ENCODE measurements at regions of chr17 and their contacts with region 1.

Region 1: DNA sequence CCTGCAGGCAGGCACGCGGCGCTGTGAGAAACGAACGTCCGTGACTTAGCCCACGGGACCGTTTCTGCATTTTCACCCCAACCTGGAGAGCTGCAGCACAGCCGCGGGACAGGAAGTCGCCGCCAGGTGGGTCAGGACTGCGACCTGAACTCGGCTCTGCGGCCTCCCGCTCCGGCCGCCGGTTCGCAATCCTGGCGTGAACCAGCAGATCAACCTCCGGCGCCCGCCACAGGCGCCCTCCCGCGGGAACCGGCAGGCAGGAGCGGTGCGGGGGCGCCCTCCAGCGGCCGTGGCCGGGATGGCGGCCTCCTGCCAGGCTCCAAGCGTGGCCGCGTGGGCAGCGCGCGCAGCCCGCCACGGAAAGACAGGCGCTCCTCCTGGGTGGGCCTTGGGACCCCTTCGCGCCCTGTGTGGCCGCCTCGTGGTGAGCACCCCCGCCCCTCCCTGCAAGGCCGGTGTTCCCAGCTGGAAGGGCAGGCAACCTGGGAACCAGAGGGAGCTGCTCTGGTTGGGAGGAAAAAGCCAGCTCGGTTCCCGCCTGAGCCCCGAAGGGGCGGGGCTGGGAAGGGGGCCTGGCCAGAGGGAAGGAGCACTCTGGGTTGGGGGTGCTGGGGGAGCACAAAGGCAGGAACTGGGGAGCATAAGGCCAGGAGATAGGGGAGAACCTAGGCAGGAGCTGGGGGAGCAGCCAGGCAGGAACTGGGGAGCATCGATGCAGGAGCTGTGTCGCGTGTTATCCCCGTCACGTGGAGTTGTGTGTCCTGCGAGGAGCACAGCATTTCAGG is 28.2 kb downstream of the ACTG1 start:
- DNase-seq: peak; percentile 93
- ATAC-seq: peak; percentile 64
- H3K4me3 Mint-ChIP-seq: peak overlapping the region; percentile 52
- H3K27ac Mint-ChIP-seq: no peak overlapping the region
- H3K4me1 Mint-ChIP-seq: peaks cover 11% of the 10 kb centered on the region
- H3K27me3 Mint-ChIP-seq: peaks cover 64% of the 10 kb centered on the region
- CTCF ChIP-seq: peak; percentile 96

Region 2: DNA sequence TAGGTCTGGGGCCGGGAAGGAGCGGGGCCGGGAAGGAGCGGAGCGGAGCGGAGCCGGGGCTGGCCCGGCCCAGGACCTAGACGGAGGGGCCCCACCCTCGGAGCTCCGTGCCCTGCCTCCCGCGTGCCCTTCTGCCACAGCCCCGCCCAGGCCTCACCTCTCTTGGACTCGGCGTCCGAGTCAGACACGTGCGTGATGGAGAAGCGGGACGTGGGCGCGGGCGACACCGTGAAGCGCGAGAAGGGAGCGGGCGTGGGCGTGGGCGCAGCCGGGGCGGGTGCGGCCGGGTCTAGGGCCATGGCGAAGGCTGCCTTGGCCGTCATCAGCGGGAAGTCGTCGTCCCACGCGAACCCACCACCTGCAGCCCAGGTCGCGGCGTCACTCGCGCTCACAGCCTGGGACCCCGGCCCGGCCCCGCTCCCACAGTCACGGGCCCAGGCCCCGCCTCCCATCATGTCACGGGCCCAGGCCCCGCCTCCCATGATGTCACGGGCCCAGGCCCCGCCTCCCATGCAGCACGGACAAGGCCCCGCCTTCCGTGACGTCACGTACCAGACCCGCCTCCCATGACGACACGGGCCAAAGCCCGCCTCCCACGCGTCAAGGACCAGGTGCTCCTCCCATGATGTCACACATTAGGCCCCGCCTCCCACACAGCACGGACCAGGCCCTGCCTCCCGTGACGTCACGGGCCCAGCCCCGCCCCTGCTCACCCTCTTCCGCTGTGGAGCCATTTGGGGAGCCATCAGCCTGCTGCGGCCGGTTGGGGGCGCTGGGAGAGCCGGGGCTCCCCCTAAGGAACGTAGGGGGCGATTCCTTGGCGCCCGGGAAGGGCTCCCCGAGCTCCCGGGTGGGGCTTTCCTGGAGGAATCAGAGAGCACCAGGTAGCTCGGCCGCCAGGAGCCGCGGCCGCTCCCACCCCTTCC is 364.9 kb before region 1 on chr17:
- CTCF ChIA-PET with region 1: interaction called, 10 read pairs
- POLR2A ChIA-PET with region 1: no interaction called
- DNase-seq: peak; percentile 99
- ATAC-seq: peak; percentile 71
- H3K4me3 Mint-ChIP-seq: peak overlapping the region; percentile 62
- H3K27ac Mint-ChIP-seq: no peak overlapping the region
- H3K4me1 Mint-ChIP-seq: no peaks in the 10 kb centered on the region
- H3K27me3 Mint-ChIP-seq: peaks cover 4% of the 10 kb centered on the region
- CTCF ChIP-seq: no peak; the same call in 1 of the 2 replicates

Region 3: GRCh38 chr17:81309070-81309905 is 175.1 kb before region 1 on chr17:
- CTCF ChIA-PET with region 1: interaction called, 22 read pairs
- POLR2A ChIA-PET with region 1: no interaction called
- DNase-seq: peak; percentile 64
- ATAC-seq: peak; percentile 79
- H3K4me3 Mint-ChIP-seq: peak overlapping the region; percentile 27
- H3K27ac Mint-ChIP-seq: peak overlapping the region; percentile 92
- H3K4me1 Mint-ChIP-seq: peaks cover 9% of the 10 kb centered on the region
- H3K27me3 Mint-ChIP-seq: no peaks in the 10 kb centered on the region; the same call in 1 of the 2 replicates
- CTCF ChIP-seq: peak; percentile 29; the same call in 1 of the 2 replicates

Region 4: GRCh38 chr17:81354954-81355347 is 129.4 kb before region 1 on chr17:
- CTCF ChIA-PET with region 1: no interaction called
- POLR2A ChIA-PET with region 1: no interaction called
- DNase-seq: no peak
- ATAC-seq: no peak
- H3K4me3 Mint-ChIP-seq: no peak overlapping the region
- H3K27ac Mint-ChIP-seq: no peak overlapping the region
- H3K4me1 Mint-ChIP-seq: peaks cover 9% of the 10 kb centered on the region
- H3K27me3 Mint-ChIP-seq: peaks cover 28% of the 10 kb centered on the region
- CTCF ChIP-seq: no peak

Region 5: GRCh38 chr17:81409190-81409935 is 75.0 kb before region 1 on chr17:
- CTCF ChIA-PET with region 1: interaction called, 17 read pairs
- POLR2A ChIA-PET with region 1: no interaction called
- DNase-seq: peak; percentile 55
- ATAC-seq: peak; percentile 72
- H3K4me3 Mint-ChIP-seq: no peak overlapping the region
- H3K27ac Mint-ChIP-seq: no peak overlapping the region
- H3K4me1 Mint-ChIP-seq: peaks cover 25% of the 10 kb centered on the region
- H3K27me3 Mint-ChIP-seq: peaks cover 35% of the 10 kb centered on the region
- CTCF ChIP-seq: 0 out of 2 replicates have a peak, but pooled peaks have one; percentile 18

Region 6: DNA sequence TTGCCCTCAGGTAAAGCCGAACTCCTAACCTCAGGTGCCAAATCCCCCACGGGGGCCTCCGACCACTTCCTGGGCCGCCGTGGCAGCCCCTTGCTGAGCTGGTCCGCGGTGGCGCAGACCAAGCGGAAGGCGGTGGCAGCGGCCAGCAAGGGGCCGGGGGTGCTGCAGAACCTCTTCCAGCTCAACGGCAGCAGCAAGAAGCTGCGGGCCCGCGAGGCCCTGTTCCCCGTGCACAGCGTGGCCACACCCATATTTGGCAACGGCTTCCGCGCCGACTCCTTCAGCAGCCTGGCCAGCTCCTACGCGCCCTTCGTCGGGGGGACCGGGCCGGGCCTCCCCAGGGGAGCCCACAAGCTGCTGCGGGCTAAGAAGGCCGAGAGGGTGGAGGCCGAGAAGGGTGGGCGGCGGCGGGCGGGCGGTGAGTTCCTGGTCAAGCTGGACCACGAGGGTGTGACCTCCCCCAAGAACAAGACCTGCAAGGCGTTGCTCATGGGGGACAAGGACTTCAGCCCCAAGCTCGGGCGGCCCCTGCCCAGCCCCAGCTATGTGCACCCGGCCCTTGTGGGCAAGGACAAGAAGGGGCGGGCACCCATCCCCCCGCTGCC is 23.4 kb before region 1 on chr17:
- CTCF ChIA-PET with region 1: interaction called, 10 read pairs
- POLR2A ChIA-PET with region 1: interaction called, 3 read pairs
- DNase-seq: no peak
- ATAC-seq: no peak
- H3K4me3 Mint-ChIP-seq: no peak overlapping the region
- H3K27ac Mint-ChIP-seq: no peak overlapping the region
- H3K4me1 Mint-ChIP-seq: 0 out of 2 replicates have a peak, but pooled peaks cover 3% of the 10 kb centered on the region
- H3K27me3 Mint-ChIP-seq: no peaks in the 10 kb centered on the region
- CTCF ChIP-seq: no peak

Region 7: GRCh38 chr17:81512560-81513371 is 28.4 kb after region 1 on chr17 and contains the start of gene ACTG1:
- CTCF ChIA-PET with region 1: interaction called, 20 read pairs
- POLR2A ChIA-PET with region 1: interaction called, 38 read pairs
- DNase-seq: peak; percentile 88
- ATAC-seq: peak; percentile 6
- H3K4me3 Mint-ChIP-seq: peak within 1 kb of the TSS; percentile 99
- H3K27ac Mint-ChIP-seq: peak within 1 kb of the TSS; percentile 94
- H3K4me1 Mint-ChIP-seq: peaks cover 41% of the 10 kb centered on the region
- H3K27me3 Mint-ChIP-seq: peaks cover 10% of the 10 kb centered on the region; the same call in 1 of the 2 replicates
- CTCF ChIP-seq: no peak
- total RNA-seq, gene ACTG1: 3,338 to 3,455 TPM (median 3,348 TPM) in 3 replicates

Region 8: DNA sequence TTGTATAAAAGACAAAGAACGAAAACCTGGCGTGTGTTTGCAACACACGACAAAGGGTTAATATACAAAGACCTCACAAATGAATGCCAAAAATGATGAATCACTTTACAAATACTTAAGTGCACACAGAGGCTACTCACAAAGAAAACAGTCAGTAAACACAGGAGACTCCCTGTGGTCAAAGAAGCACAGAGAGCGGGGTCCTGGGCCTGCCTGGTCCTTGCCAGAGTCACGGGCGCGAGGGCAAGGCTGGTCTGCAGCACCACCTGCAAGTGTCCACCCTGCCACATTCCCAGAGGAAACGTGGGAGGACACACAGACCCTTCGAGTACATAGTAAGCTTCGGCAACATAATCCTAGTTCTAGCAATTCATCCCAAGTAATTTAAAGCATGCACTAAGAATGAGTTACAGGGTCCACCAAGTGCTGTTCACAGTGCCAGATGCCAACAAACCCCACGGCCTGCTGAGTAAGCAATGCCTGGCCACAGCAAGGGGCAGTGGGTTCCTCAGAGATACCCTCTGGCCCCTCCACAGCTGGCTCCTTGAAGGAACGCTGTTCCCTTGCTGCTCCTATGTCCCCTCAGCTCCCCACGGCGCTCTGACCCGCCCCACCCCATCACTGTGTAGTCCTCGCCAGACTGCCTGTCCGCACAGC is 92.4 kb after region 1 on chr17:
- CTCF ChIA-PET with region 1: no interaction called
- POLR2A ChIA-PET with region 1: no interaction called
- DNase-seq: no peak
- ATAC-seq: no peak
- H3K4me3 Mint-ChIP-seq: no peak overlapping the region
- H3K27ac Mint-ChIP-seq: peak overlapping the region; percentile 37; the same call in 1 of the 2 replicates
- H3K4me1 Mint-ChIP-seq: no peaks in the 10 kb centered on the region
- H3K27me3 Mint-ChIP-seq: no peaks in the 10 kb centered on the region
- CTCF ChIP-seq: no peak

Region 9: DNA sequence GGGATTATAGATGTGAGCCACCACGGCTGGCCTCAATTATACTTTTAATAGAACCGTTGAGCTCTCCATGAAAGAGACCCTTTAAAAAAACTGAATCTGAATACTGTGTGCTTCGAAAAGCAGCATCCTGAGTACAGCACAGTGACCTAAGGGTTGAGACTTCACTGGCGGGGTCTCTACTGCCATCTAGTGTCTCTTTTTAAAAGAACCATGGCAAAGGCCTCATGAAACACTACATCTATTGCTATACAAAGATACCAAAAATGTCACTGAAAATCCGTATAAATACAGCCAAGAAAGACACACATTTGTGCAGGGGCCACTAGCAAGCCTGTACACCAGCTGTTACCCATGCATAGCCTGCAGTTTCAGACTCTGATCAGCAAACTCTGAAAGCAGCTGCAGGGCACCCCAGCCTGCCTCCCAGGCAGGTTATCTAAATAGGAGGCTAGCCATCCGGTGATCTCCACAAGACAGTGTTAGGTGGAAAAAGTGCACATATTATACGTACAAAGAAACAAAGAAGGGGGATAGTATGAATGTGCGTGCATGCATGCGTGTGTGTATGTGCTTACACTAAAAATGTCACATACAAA is 117.2 kb after region 1 on chr17:
- CTCF ChIA-PET with region 1: no interaction called
- POLR2A ChIA-PET with region 1: no interaction called
- DNase-seq: peak; percentile 20
- ATAC-seq: peak; percentile 86
- H3K4me3 Mint-ChIP-seq: no peak overlapping the region
- H3K27ac Mint-ChIP-seq: peak overlapping the region; percentile 32; the same call in 1 of the 2 replicates
- H3K4me1 Mint-ChIP-seq: no peaks in the 10 kb centered on the region
- H3K27me3 Mint-ChIP-seq: no peaks in the 10 kb centered on the region
- CTCF ChIP-seq: peak; percentile 29; the same call in 1 of the 2 replicates

Measured in WTC11 (cell line).